HEK293 (cell line): ENCODE measurements at regions of chr9 and their contacts with region 1.

Region 1: DNA sequence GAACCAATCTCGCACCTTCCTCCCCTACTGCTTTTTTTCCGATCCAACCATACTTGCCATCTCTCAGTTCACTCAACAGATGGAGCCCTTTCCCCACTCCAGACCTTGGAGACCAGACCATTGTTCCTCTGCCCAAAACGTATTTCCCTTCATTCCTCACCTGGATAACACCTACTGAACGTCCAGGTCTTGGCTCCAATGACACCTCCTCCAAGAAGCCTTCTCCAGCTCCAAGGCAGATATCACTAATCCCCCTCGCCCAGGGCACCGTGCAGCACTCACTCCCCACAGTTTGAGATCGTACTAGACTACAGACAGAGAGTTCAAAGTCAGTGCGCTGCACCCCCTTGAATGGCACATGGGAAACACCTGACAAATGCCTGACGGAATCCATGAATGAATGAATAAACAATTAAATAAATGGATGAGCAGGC is 47.1 kb upstream of the AKNA start:
- H3K4me3 ChIP-seq: no peak overlapping the region
- H3K27ac ChIP-seq: no peak overlapping the region
- H3K4me1 ChIP-seq: no peaks in the 10 kb centered on the region
- CTCF ChIP-seq: peak; percentile 86

Region 2: GRCh38 chr9:114366334-114367128 is 68.4 kb before region 1 on chr9:
- CTCF ChIA-PET with region 1: no interaction called
- POLR2A ChIA-PET with region 1: no interaction called
- H3K4me3 ChIP-seq: no peak overlapping the region
- H3K27ac ChIP-seq: no peak overlapping the region
- H3K4me1 ChIP-seq: no peaks in the 10 kb centered on the region
- CTCF ChIP-seq: no peak

Region 3: DNA sequence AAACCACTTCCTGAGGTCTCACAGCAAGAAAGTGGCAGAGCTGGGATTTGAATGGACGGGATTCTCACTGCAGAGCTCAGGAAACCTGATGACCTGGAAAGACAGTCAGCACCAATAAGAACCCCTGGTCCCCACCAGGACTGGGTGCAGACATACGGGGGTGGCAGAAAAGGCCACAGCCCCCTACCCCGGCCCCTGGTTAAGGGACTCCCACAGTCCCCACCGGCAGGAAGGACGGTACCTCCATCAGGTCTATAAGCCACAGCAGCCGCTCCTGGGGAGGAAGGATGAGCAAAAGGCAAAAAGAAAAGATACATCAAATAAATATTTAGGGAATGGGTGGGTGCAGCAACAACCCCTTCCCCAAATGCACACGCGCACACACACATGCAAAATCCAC is 15.1 kb before region 1 on chr9:
- CTCF ChIA-PET with region 1: interaction called, 10 read pairs
- POLR2A ChIA-PET with region 1: no interaction called
- H3K4me3 ChIP-seq: no peak overlapping the region
- H3K27ac ChIP-seq: no peak overlapping the region
- H3K4me1 ChIP-seq: no peaks in the 10 kb centered on the region
- CTCF ChIP-seq: no peak

Region 4: GRCh38 chr9:114452219-114453165 is 17.6 kb after region 1 on chr9:
- CTCF ChIA-PET with region 1: interaction called, 14 read pairs
- POLR2A ChIA-PET with region 1: no interaction called
- H3K4me3 ChIP-seq: no peak overlapping the region
- H3K27ac ChIP-seq: no peak overlapping the region
- H3K4me1 ChIP-seq: no peaks in the 10 kb centered on the region
- CTCF ChIP-seq: no peak